Activated CD8-positive, alpha-beta memory T cell treated with anti-CD3 and anti-CD28 coated beads, Interleukin-2, amount 10 ng/mL, durations not matched to agents 7 days and 5 days (primary cell): ENCODE measurements at regions of chr22 and their contacts with region 1.

Region 1: DNA sequence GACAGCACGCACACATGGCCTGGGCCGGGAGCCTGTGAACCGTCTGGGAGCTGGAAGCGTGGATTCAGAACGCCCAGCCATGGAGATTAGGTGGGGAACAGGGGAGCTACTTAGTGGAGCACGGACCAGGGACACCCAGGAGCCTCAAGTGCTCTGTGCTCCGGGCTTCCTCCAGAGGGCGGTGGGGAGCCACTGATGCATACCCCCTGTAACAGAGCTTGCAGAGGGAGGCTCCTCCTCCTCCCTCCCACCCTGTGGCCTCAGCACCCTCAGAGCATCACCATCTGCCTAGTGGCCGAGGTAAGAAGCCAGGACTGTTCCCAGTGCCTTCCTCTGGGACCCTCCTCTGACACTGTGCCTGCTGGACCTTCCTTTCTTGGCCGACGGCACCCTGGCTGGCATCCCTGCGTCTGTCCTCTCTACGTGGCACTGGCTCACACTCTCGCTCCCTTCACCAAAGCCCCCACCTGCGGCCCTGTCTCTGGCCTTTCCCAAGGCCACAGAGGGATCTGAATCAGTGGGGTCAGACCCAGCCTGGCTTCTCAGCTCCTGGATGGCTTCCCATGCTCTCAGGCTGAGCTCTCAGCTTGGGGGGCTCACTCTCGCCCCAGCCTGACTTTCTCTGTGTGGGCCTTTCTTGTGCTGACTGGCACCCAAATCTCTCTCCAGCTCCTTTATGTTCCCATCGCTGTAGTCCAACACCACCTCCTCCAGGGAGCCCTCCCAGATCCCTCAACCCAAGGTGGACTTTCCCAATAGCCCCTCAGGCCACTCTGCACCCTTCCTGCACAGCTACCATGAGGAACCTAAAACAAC is 780.9 kb downstream of the BRD1 start:
- DNase-seq: peak; percentile 46
- ATAC-seq: peak; percentile 57
- H3K4me3 Mint-ChIP-seq: no peak overlapping the region
- H3K27ac Mint-ChIP-seq: no peak overlapping the region
- H3K4me1 Mint-ChIP-seq: no peaks in the 10 kb centered on the region
- H3K27me3 Mint-ChIP-seq: no peaks in the 10 kb centered on the region

Region 2: GRCh38 chr22:49305214-49305909 is 258.6 kb after region 1 on chr22:
- CTCF ChIA-PET with region 1: interaction called, 13 read pairs
- DNase-seq: peak; percentile 66
- ATAC-seq: no peak
- H3K4me3 Mint-ChIP-seq: no peak overlapping the region
- H3K27ac Mint-ChIP-seq: no peak overlapping the region
- H3K4me1 Mint-ChIP-seq: no peaks in the 10 kb centered on the region
- H3K27me3 Mint-ChIP-seq: peaks cover 5% of the 10 kb centered on the region